Activated naive CD4-positive, alpha-beta T cell treated with anti-CD3 and anti-CD28 coated beads for 36 hours (primary cell): ENCODE measurements at regions of chr13 and their contacts with region 1.

Region 1: GRCh38 chr13:46295491-46296114 is 83.9 kb downstream of the LRRC63 start:
- DNase-seq: peak; percentile 76
- H3K4me3 Mint-ChIP-seq: peak overlapping the region; percentile 61
- H3K27ac Mint-ChIP-seq: peak overlapping the region; percentile 94
- H3K4me1 Mint-ChIP-seq: peaks cover 59% of the 10 kb centered on the region
- H3K27me3 Mint-ChIP-seq: no peaks in the 10 kb centered on the region

Region 2: GRCh38 chr13:45456196-45456972 is 839.2 kb before region 1 on chr13:
- CTCF ChIA-PET with region 1: no interaction called
- intact Hi-C with region 1: no loop called
- DNase-seq: no peak
- H3K4me3 Mint-ChIP-seq: no peak overlapping the region
- H3K27ac Mint-ChIP-seq: no peak overlapping the region
- H3K4me1 Mint-ChIP-seq: peaks cover 4% of the 10 kb centered on the region
- H3K27me3 Mint-ChIP-seq: no peaks in the 10 kb centered on the region

Region 3: GRCh38 chr13:46052319-46053161 is 243.1 kb before region 1 on chr13 and contains the start of gene ZC3H13:
- CTCF ChIA-PET with region 1: no interaction called
- intact Hi-C with region 1: loop called (anchors 2 kb)
- DNase-seq: peak; percentile 97
- H3K4me3 Mint-ChIP-seq: peak within 1 kb of the TSS; percentile 81
- H3K27ac Mint-ChIP-seq: peak within 1 kb of the TSS; percentile 94
- H3K4me1 Mint-ChIP-seq: peaks cover 29% of the 10 kb centered on the region
- H3K27me3 Mint-ChIP-seq: peaks cover 4% of the 10 kb centered on the region
- total RNA-seq, gene ZC3H13: 38.2 to 42.2 TPM

Region 4: DNA sequence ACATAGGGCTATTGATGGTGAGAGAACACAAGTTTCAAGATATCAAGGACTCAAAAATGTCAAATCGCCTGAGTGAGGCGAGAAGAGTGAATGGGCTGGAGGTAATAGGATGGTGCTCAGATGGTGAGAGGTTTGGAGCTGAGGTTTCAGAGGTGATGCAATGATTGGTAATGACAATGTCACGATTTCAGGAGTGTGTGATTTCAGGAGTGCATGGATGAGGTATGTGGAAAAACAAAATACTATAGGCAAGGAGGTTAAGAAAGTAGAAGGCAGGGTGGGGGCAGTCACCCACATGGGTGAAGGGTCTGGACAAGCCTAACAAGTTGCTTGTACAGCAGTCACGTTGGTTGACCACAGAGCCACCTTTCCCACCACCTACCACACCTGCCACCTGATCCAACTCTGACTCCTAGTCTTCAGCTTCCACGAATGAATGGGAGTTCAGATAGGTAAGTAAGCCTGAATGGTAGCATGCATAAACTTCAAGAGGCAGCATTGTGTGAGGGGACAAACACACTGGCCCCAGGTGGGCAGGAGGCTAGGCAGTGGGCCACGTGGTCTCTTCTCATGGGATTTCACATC is 20.0 kb after region 1 on chr13:
- CTCF ChIA-PET with region 1: interaction called, 27 read pairs
- intact Hi-C with region 1: loop called (anchors 1 kb)
- DNase-seq: no peak
- H3K4me3 Mint-ChIP-seq: no peak overlapping the region
- H3K27ac Mint-ChIP-seq: peak overlapping the region; percentile 0
- H3K4me1 Mint-ChIP-seq: peaks cover 51% of the 10 kb centered on the region
- H3K27me3 Mint-ChIP-seq: no peaks in the 10 kb centered on the region

Region 5: DNA sequence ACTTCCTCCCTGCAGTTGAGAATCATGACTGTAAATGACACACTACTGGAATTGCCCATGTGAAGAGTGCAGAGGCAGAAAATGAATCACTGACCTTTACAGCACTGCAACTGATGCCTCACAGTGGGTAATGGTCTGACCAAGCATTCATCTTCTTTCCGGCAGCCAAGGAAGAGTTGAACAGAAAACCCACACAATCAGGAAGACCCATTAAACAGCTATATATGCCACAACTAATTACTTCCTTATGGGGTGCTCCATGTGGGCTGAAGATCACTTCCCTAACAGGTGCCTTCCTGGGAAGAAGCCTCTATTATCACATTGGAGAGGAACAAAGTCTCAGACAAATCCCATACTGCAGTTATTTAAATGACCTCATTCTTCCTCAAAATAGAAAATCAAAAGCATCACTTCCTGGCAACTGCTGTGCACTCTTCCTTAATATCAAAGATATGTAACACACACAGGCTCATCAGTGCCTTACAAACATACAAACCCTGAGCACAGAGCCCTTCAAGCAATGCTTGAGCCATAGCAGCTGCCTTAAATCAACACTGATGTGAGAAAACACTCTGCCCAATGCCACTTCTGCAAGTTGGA is 45.6 kb after region 1 on chr13:
- CTCF ChIA-PET with region 1: no interaction called
- intact Hi-C with region 1: loop called (anchors 1 kb)
- DNase-seq: peak; percentile 78
- H3K4me3 Mint-ChIP-seq: peak overlapping the region; percentile 63
- H3K27ac Mint-ChIP-seq: peak overlapping the region; percentile 92
- H3K4me1 Mint-ChIP-seq: peaks cover 52% of the 10 kb centered on the region
- H3K27me3 Mint-ChIP-seq: no peaks in the 10 kb centered on the region

Region 6: GRCh38 chr13:46354156-46355091 is 58.8 kb after region 1 on chr13:
- CTCF ChIA-PET with region 1: no interaction called
- intact Hi-C with region 1: loop called (anchors 2 kb)
- DNase-seq: peak; percentile 68
- H3K4me3 Mint-ChIP-seq: no peak overlapping the region
- H3K27ac Mint-ChIP-seq: peak overlapping the region; percentile 94
- H3K4me1 Mint-ChIP-seq: peaks cover 24% of the 10 kb centered on the region
- H3K27me3 Mint-ChIP-seq: no peaks in the 10 kb centered on the region

Region 7: DNA sequence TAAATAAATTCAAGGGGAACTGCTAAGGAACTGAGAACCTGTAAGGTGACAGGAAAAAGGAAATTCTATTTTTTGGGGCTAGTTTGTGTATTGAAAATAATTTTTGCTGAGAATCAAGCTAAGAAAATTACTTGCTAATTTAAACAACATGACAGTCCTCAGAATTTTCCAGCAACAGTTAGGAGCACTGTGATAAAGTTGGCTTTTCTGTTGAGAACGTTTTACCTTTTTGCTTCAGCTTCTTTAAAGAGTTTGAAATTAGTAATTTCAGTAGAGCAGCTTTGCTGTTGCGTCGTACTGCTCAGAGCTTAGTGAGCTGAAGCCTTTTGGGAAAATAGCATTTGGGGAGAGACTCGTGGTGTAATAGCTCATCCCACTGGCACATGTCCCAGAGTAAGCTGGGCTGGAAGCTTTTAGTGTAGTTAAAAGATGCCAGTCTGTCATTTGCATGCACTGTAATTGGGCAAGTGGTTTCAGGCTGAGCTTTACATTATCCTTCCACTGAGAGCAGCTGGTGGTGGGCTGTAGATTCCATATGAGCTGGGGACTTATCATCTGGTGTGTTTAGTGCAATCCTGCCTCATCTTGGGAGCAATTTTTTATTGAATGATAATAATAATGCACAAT is 327.1 kb after region 1 on chr13:
- CTCF ChIA-PET with region 1: no interaction called
- intact Hi-C with region 1: no loop called
- DNase-seq: no peak
- H3K4me3 Mint-ChIP-seq: no peak overlapping the region
- H3K27ac Mint-ChIP-seq: no peak overlapping the region
- H3K4me1 Mint-ChIP-seq: peaks cover 62% of the 10 kb centered on the region
- H3K27me3 Mint-ChIP-seq: no peaks in the 10 kb centered on the region